ENCODE measurements at regions of chr1 and their contacts with region 1.

Region 1: DNA sequence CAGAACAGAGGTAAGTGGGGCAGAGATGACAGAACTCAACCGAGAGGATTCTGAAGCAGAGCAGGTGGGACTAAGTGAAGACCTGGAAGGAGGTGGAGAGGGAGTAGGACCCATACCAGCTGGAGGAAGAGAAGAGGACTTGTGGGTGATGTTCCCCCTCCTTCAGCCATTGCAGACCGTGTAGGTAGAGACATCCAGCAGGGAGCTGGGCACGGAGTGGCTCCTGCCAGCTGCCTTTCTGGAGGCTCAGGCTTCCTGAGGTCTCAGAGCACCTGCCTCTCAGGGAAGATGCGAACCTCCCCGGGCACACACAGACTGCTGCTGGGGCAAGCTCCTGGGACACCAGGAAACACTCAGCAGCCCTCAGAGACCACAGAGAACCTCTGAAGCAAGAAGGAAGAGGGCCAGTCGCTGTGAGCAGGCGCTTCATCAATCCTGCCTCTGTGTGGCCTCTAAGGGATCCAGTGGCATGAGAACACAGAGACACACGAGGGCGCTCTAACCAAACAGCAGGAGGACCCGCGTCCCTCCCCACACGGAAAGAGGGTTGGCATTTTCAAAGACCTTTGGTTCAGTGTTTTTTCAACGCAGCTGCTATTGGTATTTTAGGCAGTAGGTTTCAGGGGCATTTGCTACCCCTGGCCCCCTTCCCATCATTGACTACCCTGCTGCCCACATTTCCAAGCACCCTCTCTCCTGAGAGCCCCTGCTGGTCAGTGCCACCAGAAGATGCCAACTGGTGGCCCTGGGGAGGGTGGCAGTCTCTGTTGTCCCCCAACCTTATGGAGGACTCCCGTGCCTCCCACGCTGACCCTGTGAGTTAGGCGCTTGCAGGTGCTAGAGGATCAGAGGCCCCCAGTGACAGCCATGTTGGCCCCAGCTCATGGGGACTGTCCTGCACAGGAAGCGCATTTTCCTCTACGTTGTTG is 89.6 kb upstream of the EDN2 start:
- DNase-seq: peak; percentile 65 to 90 (median 76)
- ATAC-seq: peak; percentile 96
- H3K4me3 ChIP-seq: no peak overlapping the region
- H3K4me3 Mint-ChIP-seq: no peak overlapping the region
- H3K27ac ChIP-seq: no peak overlapping the region
- H3K27ac Mint-ChIP-seq: no peak overlapping the region
- H3K4me1 ChIP-seq: peaks cover 9% of the 10 kb centered on the region
- H3K4me1 Mint-ChIP-seq: peaks cover 12% of the 10 kb centered on the region
- H3K27me3 ChIP-seq: no peaks in the 10 kb centered on the region
- H3K27me3 Mint-ChIP-seq: no peaks in the 10 kb centered on the region
- CTCF ChIP-seq: peak; percentile 78

Region 2: DNA sequence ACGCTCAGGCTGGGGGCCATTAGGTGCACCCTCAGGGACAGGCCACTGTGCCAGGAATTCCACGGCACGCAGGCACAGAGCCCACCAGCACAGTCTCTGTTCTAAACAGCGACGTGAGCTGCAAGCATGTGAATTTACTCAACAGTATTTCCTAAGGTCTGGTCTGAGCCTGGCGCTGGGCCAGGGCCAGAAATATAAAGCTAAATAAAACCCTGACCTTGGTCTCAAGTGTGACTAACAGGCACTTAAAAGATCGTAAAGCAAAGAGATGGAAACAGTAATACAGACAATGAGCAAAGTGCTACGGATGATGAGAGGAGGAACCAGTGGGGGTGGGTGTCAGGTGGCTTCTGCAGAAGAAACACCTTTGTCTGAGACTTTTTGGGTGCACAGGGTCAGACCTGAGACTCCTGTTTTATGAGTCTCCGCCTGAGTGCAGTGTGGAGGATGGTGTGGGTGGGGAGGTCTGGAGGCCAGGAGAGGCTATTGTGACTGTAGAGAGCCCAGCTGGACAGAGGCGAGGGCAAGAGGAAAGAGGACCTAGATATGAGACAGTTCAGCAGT is 36.2 kb before region 1 on chr1:
- CTCF ChIA-PET with region 1: no interaction called
- POLR2A ChIA-PET with region 1: no interaction called
- intact Hi-C with region 1: no loop called
- DNase-seq: peak in 1 of 14 experiments; percentile 20
- ATAC-seq: no peak
- H3K4me3 ChIP-seq: no peak overlapping the region
- H3K4me3 Mint-ChIP-seq: no peak overlapping the region
- H3K27ac ChIP-seq: no peak overlapping the region
- H3K27ac Mint-ChIP-seq: no peak overlapping the region
- H3K4me1 ChIP-seq: peaks cover 9% of the 10 kb centered on the region
- H3K4me1 Mint-ChIP-seq: peaks cover 14% of the 10 kb centered on the region
- H3K27me3 ChIP-seq: no peaks in the 10 kb centered on the region
- H3K27me3 Mint-ChIP-seq: no peaks in the 10 kb centered on the region
- CTCF ChIP-seq: no peak

Region 3: GRCh38 chr1:41802532-41803501 is 228.8 kb after region 1 on chr1:
- CTCF ChIA-PET with region 1: no interaction called
- POLR2A ChIA-PET with region 1: no interaction called
- intact Hi-C with region 1: loop called in 1 of 2 experiments (anchors 10 kb)
- DNase-seq: peak in 12 of 14 experiments; percentile 12 to 77 (median 23)
- ATAC-seq: peak; percentile 65
- H3K4me3 ChIP-seq: no peak overlapping the region
- H3K4me3 Mint-ChIP-seq: peak overlapping the region; percentile 54
- H3K27ac ChIP-seq: peak overlapping the region; percentile 44 to 77
- H3K27ac Mint-ChIP-seq: peak overlapping the region; percentile 90
- H3K4me1 ChIP-seq: peaks cover 84% of the 10 kb centered on the region
- H3K4me1 Mint-ChIP-seq: peaks cover 78% of the 10 kb centered on the region
- H3K27me3 ChIP-seq: no peaks in the 10 kb centered on the region
- H3K27me3 Mint-ChIP-seq: no peaks in the 10 kb centered on the region
- CTCF ChIP-seq: no peak

Region 4: GRCh38 chr1:41812051-41812450 is 238.0 kb after region 1 on chr1:
- CTCF ChIA-PET with region 1: no interaction called
- POLR2A ChIA-PET with region 1: no interaction called
- intact Hi-C with region 1: loop called (anchors 10 kb)
- DNase-seq: peak in 11 of 14 experiments; percentile 25 to 78 (median 33)
- ATAC-seq: peak; percentile 72
- H3K4me3 ChIP-seq: no peak overlapping the region
- H3K4me3 Mint-ChIP-seq: no peak overlapping the region
- H3K27ac ChIP-seq: no peak overlapping the region
- H3K27ac Mint-ChIP-seq: no peak overlapping the region
- H3K4me1 ChIP-seq: peaks cover 32% of the 10 kb centered on the region
- H3K4me1 Mint-ChIP-seq: peaks cover 32% of the 10 kb centered on the region
- H3K27me3 ChIP-seq: no peaks in the 10 kb centered on the region
- H3K27me3 Mint-ChIP-seq: no peaks in the 10 kb centered on the region
- CTCF ChIP-seq: peak; percentile 55

Region 5: GRCh38 chr1:41870076-41870562 is 296.1 kb after region 1 on chr1:
- CTCF ChIA-PET with region 1: no interaction called
- POLR2A ChIA-PET with region 1: no interaction called
- intact Hi-C with region 1: loop called in 1 of 2 experiments (anchors 2 kb)
- DNase-seq: peak in 2 of 14 experiments; percentile 35 to 53
- ATAC-seq: no peak
- H3K4me3 ChIP-seq: no peak overlapping the region
- H3K4me3 Mint-ChIP-seq: no peak overlapping the region
- H3K27ac ChIP-seq: no peak overlapping the region
- H3K27ac Mint-ChIP-seq: no peak overlapping the region
- H3K4me1 ChIP-seq: peaks cover 28% of the 10 kb centered on the region
- H3K4me1 Mint-ChIP-seq: peaks cover 24% of the 10 kb centered on the region
- H3K27me3 ChIP-seq: no peaks in the 10 kb centered on the region
- H3K27me3 Mint-ChIP-seq: no peaks in the 10 kb centered on the region
- CTCF ChIP-seq: no peak

Region 6: DNA sequence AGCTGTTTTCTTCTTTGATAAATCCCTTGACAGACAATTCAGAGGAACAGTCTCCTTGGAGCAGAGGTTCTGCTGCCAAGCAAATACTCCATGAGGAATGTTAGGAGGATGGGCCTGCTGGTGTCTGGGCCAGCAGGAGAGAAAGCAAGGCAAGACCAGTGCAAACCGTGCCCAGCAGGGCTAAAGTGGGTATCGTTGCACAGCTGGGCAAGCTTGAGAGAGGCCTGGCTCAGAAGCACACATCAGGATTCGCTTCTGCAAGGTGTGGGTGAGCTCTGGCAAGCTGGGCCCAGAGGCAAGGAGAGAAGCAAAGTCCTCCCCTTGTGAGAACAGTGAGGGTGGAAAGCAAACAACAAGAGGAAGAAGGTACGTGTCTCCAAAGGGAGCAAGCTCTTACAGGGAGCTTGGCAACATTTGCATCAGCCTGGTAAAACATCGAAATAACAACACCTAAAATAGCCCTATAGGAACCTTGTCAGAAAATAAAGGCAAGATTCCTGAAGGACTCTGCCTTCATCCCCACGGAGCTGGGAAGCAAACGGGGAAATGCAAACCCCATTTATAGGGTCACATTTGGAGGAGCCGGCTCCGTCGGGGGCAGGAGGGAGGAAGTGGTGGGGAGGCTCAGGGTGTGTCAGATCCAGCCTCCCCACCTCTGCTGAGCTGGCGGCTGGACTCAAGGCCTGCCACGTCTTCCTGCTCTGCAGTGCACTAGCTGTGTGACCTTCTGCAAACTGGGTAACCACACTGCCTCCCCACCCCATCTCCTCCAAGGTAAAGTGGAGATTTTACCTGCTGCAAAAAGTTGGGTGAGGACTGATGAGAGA is 407.0 kb after region 1 on chr1:
- CTCF ChIA-PET with region 1: no interaction called
- POLR2A ChIA-PET with region 1: no interaction called
- intact Hi-C with region 1: loop called in 1 of 2 experiments (anchors 5 kb)
- DNase-seq: peak in 3 of 14 experiments; percentile 19 to 37 (median 32)
- ATAC-seq: peak; percentile 41
- H3K4me3 ChIP-seq: no peak overlapping the region
- H3K4me3 Mint-ChIP-seq: peak overlapping the region; percentile 32
- H3K27ac ChIP-seq: no peak overlapping the region
- H3K27ac Mint-ChIP-seq: peak overlapping the region; percentile 24
- H3K4me1 ChIP-seq: peaks cover 17% of the 10 kb centered on the region
- H3K4me1 Mint-ChIP-seq: peaks cover 37% of the 10 kb centered on the region
- H3K27me3 ChIP-seq: no peaks in the 10 kb centered on the region
- H3K27me3 Mint-ChIP-seq: no peaks in the 10 kb centered on the region
- CTCF ChIP-seq: no peak

Region 7: DNA sequence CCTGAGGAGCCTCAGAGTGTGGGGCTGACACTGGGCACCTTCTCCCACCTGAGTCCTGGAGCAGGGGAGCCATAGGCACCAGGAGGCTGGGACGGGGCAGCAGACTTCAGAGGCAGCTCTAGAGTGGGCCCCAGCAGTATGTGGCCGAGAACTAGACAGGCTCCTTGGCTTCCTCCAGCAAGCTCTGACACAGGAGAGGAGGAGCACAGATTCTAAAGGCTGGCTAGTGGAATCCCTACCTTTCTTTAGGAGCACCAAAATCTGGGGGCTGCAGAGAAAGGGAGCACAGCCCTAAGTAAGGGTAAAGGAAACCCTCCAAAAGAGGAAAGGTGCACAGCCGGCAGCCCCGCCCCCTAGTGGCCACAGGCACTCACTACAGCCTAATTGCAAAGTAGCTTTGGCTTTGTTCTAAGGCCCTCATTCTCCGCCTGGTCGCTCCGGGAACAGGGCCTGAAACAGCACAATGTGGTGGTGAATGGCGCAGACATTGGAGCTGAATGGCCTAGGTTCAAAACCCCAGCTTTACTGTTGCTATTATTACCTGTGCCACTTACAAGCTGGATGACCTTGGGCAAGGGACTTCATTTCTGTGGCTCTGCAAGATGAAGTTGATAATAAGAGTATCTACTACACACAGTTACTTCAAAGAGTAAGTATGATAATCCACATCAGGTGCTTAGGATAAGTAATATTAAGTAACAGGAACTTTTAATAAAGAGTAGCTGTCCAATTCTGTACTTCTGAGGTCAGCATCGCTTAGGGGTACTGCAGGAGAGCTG is 599.3 kb after region 1 on chr1:
- CTCF ChIA-PET with region 1: interaction called, 22 read pairs
- POLR2A ChIA-PET with region 1: interaction called, 4 read pairs
- intact Hi-C with region 1: loop called (anchors 1 kb)
- DNase-seq: peak; percentile 46 to 78 (median 60)
- ATAC-seq: peak; percentile 77
- H3K4me3 ChIP-seq: no peak overlapping the region
- H3K4me3 Mint-ChIP-seq: no peak overlapping the region
- H3K27ac ChIP-seq: no peak overlapping the region
- H3K27ac Mint-ChIP-seq: no peak overlapping the region
- H3K4me1 ChIP-seq: peaks cover 5% of the 10 kb centered on the region
- H3K4me1 Mint-ChIP-seq: no peaks in the 10 kb centered on the region
- H3K27me3 ChIP-seq: no peaks in the 10 kb centered on the region
- H3K27me3 Mint-ChIP-seq: no peaks in the 10 kb centered on the region
- CTCF ChIP-seq: peak; percentile 97